H1 (cell line): ENCODE measurements at regions of chr10 and their contacts with region 1.

Region 1: DNA sequence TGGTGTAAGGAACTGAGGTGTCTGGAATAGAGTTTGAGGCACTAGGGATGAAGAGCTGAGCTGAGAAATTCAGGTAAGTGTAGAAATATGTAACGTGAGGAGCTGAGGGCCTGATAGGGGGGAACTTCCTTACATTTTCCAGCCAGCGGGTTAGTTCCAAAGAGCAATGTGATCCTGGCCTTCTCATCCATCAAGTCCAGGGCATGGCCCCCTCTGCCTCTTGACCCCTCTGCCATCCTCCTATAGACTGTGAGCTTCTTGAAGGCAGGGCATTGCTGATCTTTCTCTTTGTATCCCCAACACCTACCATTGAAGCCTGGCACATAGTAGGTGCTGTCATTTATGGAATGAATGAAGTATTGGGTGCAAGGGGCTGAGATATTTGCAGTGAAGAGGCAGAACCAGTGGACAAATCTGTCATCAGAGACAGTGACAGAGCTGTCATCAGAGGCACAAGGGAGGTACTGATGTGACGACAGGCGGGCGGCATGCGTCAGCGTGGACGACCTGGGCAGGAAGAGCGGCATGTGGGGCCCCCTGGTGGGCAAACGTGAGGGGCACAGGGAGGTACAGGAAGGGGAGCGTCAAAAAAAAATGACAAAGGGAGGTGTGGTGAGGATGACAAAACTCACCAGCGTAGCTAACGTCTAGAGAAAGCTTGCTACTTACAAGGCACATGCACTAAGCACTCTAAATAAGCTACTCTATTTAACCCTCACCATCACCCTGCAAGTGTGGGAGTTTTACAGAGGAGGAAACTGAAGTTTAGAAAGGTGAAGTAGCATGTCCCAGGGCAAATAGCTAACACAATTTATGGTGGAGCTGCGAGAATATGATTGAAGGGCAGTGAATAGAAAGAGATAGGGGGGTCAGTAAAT is 5.2 kb upstream of the CAMK2G start:
- DNase-seq: peak; percentile 50 to 87
- H3K4me3 ChIP-seq: no peak overlapping the region
- H3K27ac ChIP-seq: no peak overlapping the region
- H3K4me1 ChIP-seq: peaks cover 0 to 8% (median 4%) of the 10 kb centered on the region in 4 experiments; a peak in 5 of 7 replicates
- H3K27me3 ChIP-seq: peaks cover 0 to 3% (median 0%) of the 10 kb centered on the region in 4 experiments; a peak in 1 of 7 replicates
- CTCF ChIP-seq: peak; percentile 89 to 95 (median 90)
- EP300 ChIP-seq: no peak
- POLR2A ChIP-seq: no peak
- RAD21 ChIP-seq: peak; percentile 78 to 90

Region 2: DNA sequence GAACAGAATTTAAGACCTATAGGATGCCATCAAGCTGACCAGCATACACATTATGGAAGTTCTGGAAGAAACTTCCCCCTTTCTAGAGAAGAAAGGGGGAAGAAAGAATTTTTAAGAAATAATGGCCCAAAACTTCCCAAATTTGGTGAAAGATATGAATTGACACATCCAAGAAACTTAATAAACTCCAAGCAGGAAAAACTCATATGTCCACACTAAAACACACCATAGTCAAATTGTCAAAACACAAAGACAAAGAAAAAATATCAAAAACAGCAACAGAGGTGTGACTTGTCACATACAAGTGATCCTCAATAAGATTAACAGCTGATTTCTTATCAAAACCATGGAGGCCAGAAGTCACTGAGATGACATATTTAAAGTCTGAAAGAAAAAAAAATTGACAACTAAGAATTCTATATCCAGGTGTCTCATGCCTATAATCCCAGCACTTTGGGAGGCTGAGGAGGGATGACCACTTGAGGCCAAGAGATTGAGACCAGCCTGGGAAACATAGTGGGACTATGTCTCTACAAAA is 573.3 kb before region 1 on chr10:
- CTCF ChIA-PET with region 1: no interaction called
- POLR2A ChIA-PET with region 1: no interaction called
- DNase-seq: no peak
- H3K4me3 ChIP-seq: no peak overlapping the region
- H3K27ac ChIP-seq: no peak overlapping the region
- H3K4me1 ChIP-seq: no peaks in the 10 kb centered on the region
- H3K27me3 ChIP-seq: no peaks in the 10 kb centered on the region
- CTCF ChIP-seq: no peak
- EP300 ChIP-seq: no peak
- POLR2A ChIP-seq: no peak
- RAD21 ChIP-seq: no peak

Region 3: GRCh38 chr10:73478636-73479035 is 400.9 kb before region 1 on chr10:
- CTCF ChIA-PET with region 1: no interaction called
- POLR2A ChIA-PET with region 1: no interaction called
- DNase-seq: no peak
- H3K4me3 ChIP-seq: no peak overlapping the region
- H3K27ac ChIP-seq: no peak overlapping the region
- H3K4me1 ChIP-seq: no peaks in the 10 kb centered on the region
- H3K27me3 ChIP-seq: no peaks in the 10 kb centered on the region
- CTCF ChIP-seq: no peak
- EP300 ChIP-seq: no peak
- POLR2A ChIP-seq: no peak
- RAD21 ChIP-seq: no peak

Region 4: GRCh38 chr10:73509695-73510094 is 369.8 kb before region 1 on chr10:
- CTCF ChIA-PET with region 1: no interaction called
- POLR2A ChIA-PET with region 1: no interaction called
- DNase-seq: no peak
- H3K4me3 ChIP-seq: no peak overlapping the region
- H3K27ac ChIP-seq: no peak overlapping the region
- H3K4me1 ChIP-seq: no peaks in the 10 kb centered on the region; a peak in 1 of 7 replicates
- H3K27me3 ChIP-seq: no peaks in the 10 kb centered on the region
- CTCF ChIP-seq: no peak
- EP300 ChIP-seq: no peak
- POLR2A ChIP-seq: no peak
- RAD21 ChIP-seq: no peak

Region 5: DNA sequence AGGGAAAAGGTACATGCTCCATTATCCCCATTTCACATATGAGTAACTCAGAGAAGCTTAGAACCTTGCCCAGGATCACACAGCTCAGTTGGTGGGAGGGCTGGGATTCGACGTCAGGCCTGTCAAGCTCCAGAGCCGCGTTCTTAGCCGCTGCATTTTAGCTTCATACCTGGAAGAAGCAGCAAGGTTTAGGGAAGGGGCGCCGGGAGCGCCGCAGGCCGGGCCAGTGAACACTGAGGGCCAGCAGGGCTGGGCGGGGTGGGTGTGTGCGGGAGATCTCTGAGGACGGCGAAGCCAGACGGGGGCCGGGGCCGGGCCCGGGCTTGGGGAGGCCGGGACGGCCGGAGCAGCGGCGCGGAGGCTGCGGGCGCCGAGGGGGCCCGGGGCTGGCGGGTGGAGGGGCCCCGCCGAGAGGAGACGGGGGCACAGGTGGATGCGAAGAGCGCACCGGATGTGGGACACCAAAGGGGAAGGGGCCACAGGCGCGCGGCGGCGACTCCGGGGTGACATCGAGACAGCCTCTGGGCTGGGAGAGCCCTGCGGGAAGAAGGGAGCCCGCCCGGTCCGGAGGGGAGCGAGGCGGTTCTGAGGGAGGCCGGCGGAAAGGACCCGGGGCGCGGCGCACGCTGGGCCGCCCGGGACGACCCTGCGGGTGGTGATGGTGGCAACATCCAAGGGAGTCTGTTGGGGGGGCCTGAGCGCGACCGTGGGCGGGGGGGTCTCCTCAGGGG is 68.6 kb before region 1 on chr10:
- CTCF ChIA-PET with region 1: interaction called, 11 read pairs
- POLR2A ChIA-PET with region 1: no interaction called
- DNase-seq: peak in 1 of 2 experiments; percentile 75
- H3K4me3 ChIP-seq: peak overlapping the region; percentile 69 to 91 (median 78)
- H3K27ac ChIP-seq: no peak overlapping the region
- H3K4me1 ChIP-seq: peaks cover 0 to 4% (median 2%) of the 10 kb centered on the region in 4 experiments; a peak in 4 of 7 replicates
- H3K27me3 ChIP-seq: no peaks in the 10 kb centered on the region
- CTCF ChIP-seq: no peak
- EP300 ChIP-seq: no peak
- POLR2A ChIP-seq: no peak
- RAD21 ChIP-seq: no peak

Region 6: GRCh38 chr10:73848821-73849489 is 30.6 kb before region 1 on chr10:
- CTCF ChIA-PET with region 1: interaction called, 279 read pairs
- POLR2A ChIA-PET with region 1: interaction called, 9 read pairs
- DNase-seq: peak; percentile 60 to 99
- H3K4me3 ChIP-seq: no peak overlapping the region
- H3K27ac ChIP-seq: no peak overlapping the region
- H3K4me1 ChIP-seq: peaks cover 0 to 7% (median 3%) of the 10 kb centered on the region in 4 experiments; a peak in 3 of 7 replicates
- H3K27me3 ChIP-seq: no peaks in the 10 kb centered on the region
- CTCF ChIP-seq: peak; percentile 94 to 100 (median 99)
- EP300 ChIP-seq: no peak
- POLR2A ChIP-seq: no peak
- RAD21 ChIP-seq: peak; percentile 95 to 98

Region 7: GRCh38 chr10:73902351-73902750 is 22.8 kb after region 1 on chr10:
- CTCF ChIA-PET with region 1: interaction called, 103 read pairs
- POLR2A ChIA-PET with region 1: no interaction called
- DNase-seq: no peak
- H3K4me3 ChIP-seq: no peak overlapping the region
- H3K27ac ChIP-seq: no peak overlapping the region
- H3K4me1 ChIP-seq: peaks cover 6 to 10% (median 10%) of the 10 kb centered on the region in 4 experiments; a peak in 6 of 7 replicates
- H3K27me3 ChIP-seq: no peaks in the 10 kb centered on the region; a peak in 1 of 7 replicates
- CTCF ChIP-seq: no peak
- EP300 ChIP-seq: no peak
- POLR2A ChIP-seq: no peak
- RAD21 ChIP-seq: no peak

Region 8: GRCh38 chr10:73940634-73941221 is 61.2 kb after region 1 on chr10:
- CTCF ChIA-PET with region 1: interaction called, 681 read pairs
- POLR2A ChIA-PET with region 1: no interaction called
- DNase-seq: peak in 1 of 2 experiments; percentile 96
- H3K4me3 ChIP-seq: 0 out of 8 replicates have a peak overlapping the region, but pooled peaks of 1 of the 4 experiments have one; percentile 19
- H3K27ac ChIP-seq: no peak overlapping the region
- H3K4me1 ChIP-seq: peaks cover 0 to 4% (median 2%) of the 10 kb centered on the region in 4 experiments; a peak in 3 of 7 replicates
- H3K27me3 ChIP-seq: 0 out of 7 replicates have a peak, but pooled peaks cover 0 to 2% (median 0%) of the 10 kb centered on the region in 4 experiments
- CTCF ChIP-seq: peak; percentile 88 to 90 (median 90)
- EP300 ChIP-seq: no peak
- POLR2A ChIP-seq: no peak; a peak in 1 of 3 replicates
- RAD21 ChIP-seq: peak; percentile 93 to 96

Region 9: GRCh38 chr10:74081192-74081803 is 201.8 kb after region 1 on chr10:
- CTCF ChIA-PET with region 1: interaction called, 10 read pairs
- POLR2A ChIA-PET with region 1: no interaction called
- DNase-seq: no peak
- H3K4me3 ChIP-seq: no peak overlapping the region
- H3K27ac ChIP-seq: no peak overlapping the region
- H3K4me1 ChIP-seq: peaks cover 0 to 15% (median 2%) of the 10 kb centered on the region in 4 experiments; a peak in 3 of 7 replicates
- H3K27me3 ChIP-seq: no peaks in the 10 kb centered on the region
- CTCF ChIP-seq: peak; percentile 32 to 78 (median 77)
- EP300 ChIP-seq: no peak
- POLR2A ChIP-seq: no peak
- RAD21 ChIP-seq: peak; percentile 60 to 77